Activated CD8-positive, alpha-beta T cell treated with anti-CD3 and anti-CD28 coated beads for 36 hours (primary cell): ENCODE measurements at regions of chr9 and their contacts with region 1.

Region 1: DNA sequence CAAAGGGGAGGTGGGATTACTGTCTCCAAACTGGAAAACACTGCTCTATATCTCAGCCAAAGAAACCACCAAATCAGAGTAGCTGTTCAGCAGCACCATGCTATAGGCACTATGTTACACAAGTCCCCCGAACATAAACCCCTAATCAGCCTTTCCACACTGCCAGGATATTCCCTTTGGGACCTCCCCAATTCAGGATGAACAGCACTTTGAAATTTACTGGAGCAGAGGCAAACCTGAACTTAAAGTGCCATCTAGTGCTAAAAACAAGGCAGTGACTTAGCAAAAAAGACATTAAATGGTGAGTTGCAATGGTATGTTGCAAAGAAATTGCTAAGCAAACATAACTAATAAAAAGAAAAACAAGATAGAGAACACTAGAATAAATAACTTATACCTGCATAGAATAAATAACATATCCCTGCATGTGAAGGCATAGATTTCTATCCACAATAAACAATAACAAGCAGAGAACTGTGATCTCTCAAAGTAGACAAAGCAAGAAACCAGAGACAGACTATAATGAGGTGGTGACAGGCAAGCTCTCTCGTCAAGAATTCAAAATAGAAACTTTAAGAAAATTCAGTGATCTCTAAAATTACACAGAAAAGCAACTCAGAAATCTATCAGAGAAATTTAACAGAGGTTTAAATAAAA is 584.4 kb upstream of the ACO1 start:
- DNase-seq: peak; percentile 1
- ATAC-seq: no peak
- H3K4me3 Mint-ChIP-seq: no peak overlapping the region
- H3K27ac Mint-ChIP-seq: no peak overlapping the region
- H3K4me1 Mint-ChIP-seq: peaks cover 10% of the 10 kb centered on the region
- H3K27me3 Mint-ChIP-seq: no peaks in the 10 kb centered on the region
- CTCF ChIP-seq: peak; percentile 49

Region 2: GRCh38 chr9:31119882-31120454 is 680.1 kb before region 1 on chr9:
- CTCF ChIA-PET with region 1: no interaction called
- POLR2A ChIA-PET with region 1: no interaction called
- intact Hi-C with region 1: loop called (anchors 5 kb)
- DNase-seq: peak; percentile 43
- ATAC-seq: peak; percentile 56
- H3K4me3 Mint-ChIP-seq: no peak overlapping the region
- H3K27ac Mint-ChIP-seq: no peak overlapping the region
- H3K4me1 Mint-ChIP-seq: peaks cover 2% of the 10 kb centered on the region
- H3K27me3 Mint-ChIP-seq: no peaks in the 10 kb centered on the region
- CTCF ChIP-seq: peak; percentile 38

Region 3: DNA sequence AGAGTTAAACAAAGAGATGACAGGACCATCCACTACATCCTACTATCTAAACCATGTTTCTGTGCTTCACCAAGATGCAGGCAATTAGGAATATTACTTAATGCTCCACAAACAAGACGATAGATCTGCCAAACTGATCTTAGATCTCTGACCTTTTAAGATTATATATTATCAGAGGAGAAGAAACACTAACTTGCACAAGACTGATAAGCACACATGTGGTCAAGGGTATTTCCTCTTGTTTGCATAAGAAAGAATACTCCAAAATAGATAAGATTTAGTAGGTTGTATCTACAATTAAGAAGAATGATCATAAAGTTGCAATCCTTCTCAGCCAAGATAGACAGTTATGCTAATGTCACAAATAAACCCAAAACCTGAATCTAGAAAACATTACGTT is 16.6 kb before region 1 on chr9:
- CTCF ChIA-PET with region 1: no interaction called
- POLR2A ChIA-PET with region 1: no interaction called
- intact Hi-C with region 1: no loop called
- DNase-seq: no peak
- ATAC-seq: no peak
- H3K4me3 Mint-ChIP-seq: no peak overlapping the region
- H3K27ac Mint-ChIP-seq: no peak overlapping the region
- H3K4me1 Mint-ChIP-seq: no peaks in the 10 kb centered on the region
- H3K27me3 Mint-ChIP-seq: no peaks in the 10 kb centered on the region
- CTCF ChIP-seq: no peak